CD4-positive, alpha-beta T cell (primary cell): ENCODE measurements at regions of chr2 and their contacts with region 1.

Region 1: DNA sequence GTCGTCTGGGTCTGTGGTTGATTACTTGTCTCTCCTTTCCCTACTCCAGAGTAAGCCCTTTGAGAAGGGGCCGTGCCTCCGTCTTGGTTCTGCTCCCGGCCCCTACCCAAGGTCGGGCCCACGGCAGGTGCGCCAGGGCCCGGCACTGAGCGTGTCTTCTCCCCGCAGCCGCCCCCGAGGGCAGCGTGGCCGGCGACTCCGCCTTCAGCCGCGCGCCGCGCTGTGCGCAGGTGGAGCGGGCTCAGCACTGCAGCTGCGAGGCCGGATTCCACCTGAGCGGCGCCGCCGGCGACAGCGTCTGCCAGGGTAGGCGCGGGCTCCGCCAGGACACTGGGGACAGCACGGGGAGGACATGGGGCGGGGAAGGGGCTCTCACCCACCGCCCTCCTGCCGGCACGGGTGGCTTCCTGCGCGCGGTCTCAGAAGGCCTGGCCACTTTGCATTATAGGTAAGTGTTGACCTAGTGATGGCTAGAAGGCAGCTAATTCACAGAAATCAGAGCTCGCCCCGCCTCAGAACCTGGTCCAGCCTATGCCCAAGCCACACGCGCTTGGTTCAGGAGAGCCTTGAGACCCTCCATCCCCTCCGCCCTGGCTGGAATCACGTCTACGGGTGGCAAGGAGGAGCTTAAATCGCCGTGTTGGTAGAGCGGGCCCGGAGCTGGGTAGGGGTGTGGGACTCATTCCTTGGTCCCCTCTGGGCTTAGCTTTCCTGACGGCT is 43.5 kb downstream of the FBLN7 start:
- DNase-seq: peak; percentile 60 to 89 (median 70)
- ATAC-seq: peak; percentile 74
- H3K4me3 ChIP-seq: peak overlapping the region; percentile 71
- H3K4me3 Mint-ChIP-seq: peak overlapping the region; percentile 96
- H3K27ac ChIP-seq: peak overlapping the region; percentile 86 to 90
- H3K27ac Mint-ChIP-seq: peak overlapping the region; percentile 94
- H3K4me1 ChIP-seq: peaks cover 55% of the 10 kb centered on the region
- H3K4me1 Mint-ChIP-seq: peaks cover 69% of the 10 kb centered on the region
- H3K27me3 ChIP-seq: no peaks in the 10 kb centered on the region
- H3K27me3 Mint-ChIP-seq: no peaks in the 10 kb centered on the region
- CTCF ChIP-seq: peak; percentile 22

Region 2: GRCh38 chr2:112010751-112011150 is 171.0 kb before region 1 on chr2:
- CTCF ChIA-PET with region 1: no interaction called
- POLR2A ChIA-PET with region 1: no interaction called
- intact Hi-C with region 1: no loop called
- DNase-seq: peak in 2 of 14 experiments; percentile 18 to 49
- ATAC-seq: no peak
- H3K4me3 ChIP-seq: no peak overlapping the region
- H3K4me3 Mint-ChIP-seq: no peak overlapping the region
- H3K27ac ChIP-seq: no peak overlapping the region
- H3K27ac Mint-ChIP-seq: no peak overlapping the region
- H3K4me1 ChIP-seq: no peaks in the 10 kb centered on the region
- H3K4me1 Mint-ChIP-seq: no peaks in the 10 kb centered on the region
- H3K27me3 ChIP-seq: no peaks in the 10 kb centered on the region
- H3K27me3 Mint-ChIP-seq: no peaks in the 10 kb centered on the region
- CTCF ChIP-seq: no peak

Region 3: DNA sequence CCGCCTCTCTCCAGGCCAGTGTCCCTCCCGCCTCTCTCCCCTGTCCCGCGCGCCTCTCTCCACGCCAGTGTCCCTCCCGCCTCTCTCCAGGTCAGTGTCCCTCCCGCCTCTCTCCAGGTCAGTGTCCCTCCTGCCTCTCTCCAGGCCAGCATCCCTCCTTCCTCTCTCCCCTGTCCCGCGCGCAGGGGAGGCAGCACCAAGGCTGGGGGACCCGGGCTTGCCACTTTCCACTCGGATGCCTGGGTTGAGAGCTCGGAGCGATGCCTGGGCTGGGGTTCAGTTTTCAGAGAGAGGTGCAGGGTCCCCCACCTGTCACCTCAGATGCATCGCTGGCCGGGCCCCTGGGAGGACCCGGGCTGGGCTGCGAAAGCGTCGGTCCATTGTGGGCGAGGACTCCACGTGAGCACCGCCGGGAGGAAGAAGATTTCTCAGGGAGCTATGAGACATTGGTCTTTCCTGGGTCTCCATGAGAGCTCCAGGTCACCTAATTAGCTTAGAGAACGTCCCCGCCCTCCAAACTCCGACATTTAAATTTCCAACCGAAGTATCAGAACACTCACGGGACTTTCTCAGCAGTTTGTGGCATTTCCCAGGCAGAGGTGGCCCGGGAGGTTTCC is 41.4 kb before region 1 on chr2:
- CTCF ChIA-PET with region 1: no interaction called
- POLR2A ChIA-PET with region 1: interaction called, 6 read pairs
- intact Hi-C with region 1: loop called in 1 of 2 experiments (anchors 5 kb)
- DNase-seq: peak in 1 of 14 experiments; percentile 29
- ATAC-seq: no peak
- H3K4me3 ChIP-seq: no peak overlapping the region
- H3K4me3 Mint-ChIP-seq: peak overlapping the region; percentile 71
- H3K27ac ChIP-seq: no peak overlapping the region
- H3K27ac Mint-ChIP-seq: no peak overlapping the region
- H3K4me1 ChIP-seq: peaks cover 15% of the 10 kb centered on the region
- H3K4me1 Mint-ChIP-seq: peaks cover 8% of the 10 kb centered on the region
- H3K27me3 ChIP-seq: peaks cover 10 to 21% of the 10 kb centered on the region in 2 experiments
- H3K27me3 Mint-ChIP-seq: peaks cover 33% of the 10 kb centered on the region
- CTCF ChIP-seq: no peak

Region 4: DNA sequence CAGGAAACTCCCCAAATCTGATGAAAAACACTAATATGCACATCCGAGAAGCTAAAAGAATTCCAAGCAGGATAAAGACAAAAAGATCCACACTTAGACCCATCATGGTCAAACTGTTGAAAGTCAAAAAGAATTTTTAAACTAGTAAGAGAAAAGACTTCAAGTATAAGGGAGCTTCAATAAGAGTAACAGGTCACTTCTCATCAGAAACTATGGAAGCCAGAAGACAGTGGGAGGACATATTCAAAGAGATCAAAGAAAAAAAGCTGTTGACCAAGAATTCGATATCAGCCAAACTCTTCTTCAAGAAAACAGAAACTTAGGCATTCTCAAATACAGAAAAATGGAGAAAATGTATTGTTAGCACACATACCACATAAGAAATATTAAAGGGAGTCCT is 22.7 kb after region 1 on chr2:
- CTCF ChIA-PET with region 1: interaction called, 5 read pairs
- POLR2A ChIA-PET with region 1: interaction called, 15 read pairs
- intact Hi-C with region 1: no loop called
- DNase-seq: no peak
- ATAC-seq: peak; percentile 48
- H3K4me3 ChIP-seq: no peak overlapping the region
- H3K4me3 Mint-ChIP-seq: no peak overlapping the region
- H3K27ac ChIP-seq: no peak overlapping the region
- H3K27ac Mint-ChIP-seq: no peak overlapping the region
- H3K4me1 ChIP-seq: no peaks in the 10 kb centered on the region
- H3K4me1 Mint-ChIP-seq: peaks cover 6% of the 10 kb centered on the region
- H3K27me3 ChIP-seq: no peaks in the 10 kb centered on the region
- H3K27me3 Mint-ChIP-seq: no peaks in the 10 kb centered on the region
- CTCF ChIP-seq: no peak

Region 5: GRCh38 chr2:112254466-112255239 is 72.9 kb after region 1 on chr2 and contains the start of gene ZC3H8:
- CTCF ChIA-PET with region 1: interaction called, 9 read pairs
- POLR2A ChIA-PET with region 1: interaction called, 31 read pairs
- intact Hi-C with region 1: loop called in 1 of 2 experiments (anchors 5 kb)
- DNase-seq: peak; percentile 91 to 98 (median 96)
- ATAC-seq: peak; percentile 92
- H3K4me3 ChIP-seq: peak within 1 kb of the TSS; percentile 83
- H3K4me3 Mint-ChIP-seq: peak within 1 kb of the TSS; percentile 91
- H3K27ac ChIP-seq: peak within 1 kb of the TSS; percentile 92
- H3K27ac Mint-ChIP-seq: peak within 1 kb of the TSS; percentile 88
- H3K4me1 ChIP-seq: peaks cover 32% of the 10 kb centered on the region
- H3K4me1 Mint-ChIP-seq: peaks cover 21% of the 10 kb centered on the region
- H3K27me3 ChIP-seq: no peaks in the 10 kb centered on the region
- H3K27me3 Mint-ChIP-seq: no peaks in the 10 kb centered on the region
- CTCF ChIP-seq: no peak
- total RNA-seq, gene ZC3H8: 10.2 to 16.2 TPM